ENCODE measurements at regions of chr7 and their contacts with region 1.

Region 1: GRCh38 chr7:48109848-48110663 is 21.0 kb downstream of the UPP1 start:
- DNase-seq: peak; percentile 91
- ATAC-seq: peak; percentile 93
- H3K4me3 Mint-ChIP-seq: no peak overlapping the region
- H3K27ac Mint-ChIP-seq: peak overlapping the region; percentile 41
- H3K4me1 Mint-ChIP-seq: peaks cover 12% of the 10 kb centered on the region
- H3K27me3 Mint-ChIP-seq: no peaks in the 10 kb centered on the region

Region 2: GRCh38 chr7:47866120-47866519 is 243.9 kb before region 1 on chr7:
- CTCF ChIA-PET with region 1: no interaction called
- DNase-seq: no peak
- ATAC-seq: no peak
- H3K4me3 Mint-ChIP-seq: no peak overlapping the region
- H3K27ac Mint-ChIP-seq: no peak overlapping the region
- H3K4me1 Mint-ChIP-seq: peaks cover 6% of the 10 kb centered on the region
- H3K27me3 Mint-ChIP-seq: no peaks in the 10 kb centered on the region

Region 3: DNA sequence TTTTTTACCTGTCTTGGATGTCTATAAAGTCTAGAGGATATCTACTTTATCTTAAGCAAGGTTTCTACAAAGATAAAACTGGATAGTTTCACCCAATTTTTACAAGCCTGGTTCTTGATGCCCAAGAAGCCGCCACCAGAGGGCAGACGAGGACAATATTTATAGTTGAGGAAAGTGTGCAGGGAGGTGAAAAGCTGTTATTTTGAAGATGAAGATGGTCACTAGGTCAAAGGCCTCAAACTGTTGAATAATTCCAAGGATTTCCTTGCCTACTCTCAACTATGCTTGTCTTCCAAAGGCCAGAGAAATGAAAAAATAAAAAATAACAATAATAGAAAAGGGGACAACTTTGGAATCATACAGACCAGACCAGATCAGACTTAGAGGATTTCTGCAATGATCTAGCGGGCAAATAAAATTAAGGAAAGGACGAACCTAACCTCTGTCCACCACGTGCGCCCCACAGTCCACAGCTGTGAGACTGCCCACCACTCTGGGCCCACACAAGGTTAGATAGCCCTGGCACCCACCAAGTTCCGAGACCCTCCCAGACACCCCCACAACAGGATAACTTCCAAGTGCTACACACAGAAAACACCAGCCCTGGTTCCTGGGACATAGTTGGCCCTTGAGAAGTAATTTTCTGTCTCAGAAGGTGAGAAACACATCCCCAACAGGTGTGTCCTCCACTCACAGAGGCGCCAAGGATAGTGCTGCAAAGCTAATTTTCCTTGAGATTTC is 164.6 kb before region 1 on chr7:
- CTCF ChIA-PET with region 1: interaction called, 54 read pairs
- DNase-seq: peak; percentile 82
- ATAC-seq: peak; percentile 83
- H3K4me3 Mint-ChIP-seq: no peak overlapping the region
- H3K27ac Mint-ChIP-seq: no peak overlapping the region
- H3K4me1 Mint-ChIP-seq: peaks cover 7% of the 10 kb centered on the region
- H3K27me3 Mint-ChIP-seq: no peaks in the 10 kb centered on the region

Region 4: GRCh38 chr7:47982610-47983009 is 127.4 kb before region 1 on chr7:
- CTCF ChIA-PET with region 1: interaction called, 22 read pairs
- DNase-seq: no peak
- ATAC-seq: no peak
- H3K4me3 Mint-ChIP-seq: no peak overlapping the region
- H3K27ac Mint-ChIP-seq: no peak overlapping the region
- H3K4me1 Mint-ChIP-seq: peaks cover 15% of the 10 kb centered on the region
- H3K27me3 Mint-ChIP-seq: no peaks in the 10 kb centered on the region

Region 5: DNA sequence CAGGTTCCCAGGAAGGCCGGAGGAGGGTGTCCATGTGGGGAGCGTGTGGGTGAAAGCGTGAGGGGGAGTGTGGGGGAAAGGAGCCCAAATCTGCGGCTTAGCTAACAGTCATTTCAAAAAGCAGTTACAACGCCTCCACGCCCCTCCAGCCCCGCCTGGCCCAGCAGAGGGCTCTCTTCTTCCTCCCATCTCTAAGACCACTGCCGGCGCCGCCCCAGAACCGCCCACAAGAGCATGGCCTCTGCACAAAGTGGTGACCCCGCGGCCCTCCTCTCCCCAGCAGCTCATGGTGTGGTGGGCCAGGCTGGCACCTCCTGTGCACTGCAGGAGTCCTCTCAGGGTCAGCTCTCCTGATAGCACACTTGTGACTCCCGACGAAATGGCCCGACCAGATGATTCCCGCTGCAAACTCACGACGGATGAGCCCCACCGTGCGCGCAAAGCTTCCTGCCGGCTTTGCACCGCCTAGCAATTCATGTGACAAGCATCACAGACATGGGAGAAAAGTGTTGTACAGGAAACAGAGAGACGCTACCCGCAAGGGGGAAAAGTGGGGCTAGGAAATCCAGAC is 118.2 kb before region 1 on chr7:
- CTCF ChIA-PET with region 1: interaction called, 70 read pairs
- DNase-seq: peak; percentile 96
- ATAC-seq: peak; percentile 98
- H3K4me3 Mint-ChIP-seq: peak overlapping the region; percentile 81
- H3K27ac Mint-ChIP-seq: peak overlapping the region; percentile 92
- H3K4me1 Mint-ChIP-seq: peaks cover 21% of the 10 kb centered on the region
- H3K27me3 Mint-ChIP-seq: no peaks in the 10 kb centered on the region

Region 6: DNA sequence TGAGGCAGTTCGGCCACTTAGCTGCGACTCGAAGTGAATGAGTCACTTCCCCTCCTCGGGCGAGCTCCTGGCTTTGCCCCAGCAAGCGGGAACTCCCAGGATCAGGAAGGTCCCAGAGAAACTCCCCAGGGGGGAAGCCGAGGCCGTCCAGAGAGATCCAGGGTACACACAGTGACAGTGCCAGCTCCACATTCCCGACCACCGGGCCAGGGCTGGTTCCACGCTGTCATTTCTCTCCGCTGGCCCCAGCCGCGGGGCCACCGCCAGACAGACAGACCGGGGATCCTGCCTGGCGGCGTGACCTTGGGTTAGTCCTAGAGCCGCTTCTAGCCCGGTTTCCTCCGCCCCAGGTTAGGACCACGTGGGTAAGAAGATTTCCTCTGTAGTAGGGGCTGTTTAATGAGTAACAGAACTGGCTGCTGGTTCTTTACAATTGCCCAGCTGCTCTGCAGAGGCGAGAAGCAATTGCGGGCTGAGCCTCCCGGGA is 21.5 kb before region 1 on chr7:
- CTCF ChIA-PET with region 1: interaction called, 12 read pairs
- DNase-seq: no peak
- ATAC-seq: peak; percentile 73
- H3K4me3 Mint-ChIP-seq: peak overlapping the region; percentile 82
- H3K27ac Mint-ChIP-seq: peak overlapping the region; percentile 98
- H3K4me1 Mint-ChIP-seq: peaks cover 71% of the 10 kb centered on the region
- H3K27me3 Mint-ChIP-seq: no peaks in the 10 kb centered on the region

Region 7: GRCh38 chr7:48094751-48095562 is 15.1 kb before region 1 on chr7:
- CTCF ChIA-PET with region 1: interaction called, 19 read pairs
- DNase-seq: no peak
- ATAC-seq: no peak
- H3K4me3 Mint-ChIP-seq: no peak overlapping the region
- H3K27ac Mint-ChIP-seq: peak overlapping the region; percentile 73
- H3K4me1 Mint-ChIP-seq: peaks cover 89% of the 10 kb centered on the region
- H3K27me3 Mint-ChIP-seq: no peaks in the 10 kb centered on the region

Region 8: DNA sequence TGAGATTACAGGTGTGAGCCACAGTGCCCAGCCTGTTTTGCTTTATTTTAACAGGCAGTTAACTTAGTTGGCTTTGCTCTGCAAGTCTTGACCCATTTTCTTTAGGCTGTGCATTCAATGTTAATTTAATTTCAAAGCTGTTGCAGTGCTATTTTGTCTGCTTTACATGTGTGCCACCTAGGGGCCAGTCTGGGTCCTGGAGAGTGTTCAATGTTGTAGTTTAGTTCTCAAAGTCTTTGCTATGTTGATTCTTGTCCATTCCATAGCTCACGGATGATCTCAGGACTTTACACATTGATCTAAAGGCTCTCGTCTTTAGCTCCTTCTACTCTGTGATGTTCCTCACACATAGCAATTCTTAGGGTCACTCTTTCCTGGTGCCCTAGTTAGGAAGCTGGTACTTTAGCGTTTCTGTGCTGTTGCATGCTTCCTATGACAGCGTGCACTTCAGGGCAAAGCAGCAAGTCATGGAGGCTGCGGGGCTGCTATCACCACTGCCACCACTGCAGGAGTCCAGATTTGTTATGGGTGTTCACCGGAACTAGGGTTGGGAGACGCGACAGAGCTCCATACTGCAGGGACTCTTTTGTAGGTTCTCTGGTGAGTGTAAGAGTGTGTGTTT is 44.8 kb after region 1 on chr7:
- CTCF ChIA-PET with region 1: interaction called, 10 read pairs
- DNase-seq: peak; percentile 67
- ATAC-seq: peak; percentile 78
- H3K4me3 Mint-ChIP-seq: no peak overlapping the region
- H3K27ac Mint-ChIP-seq: no peak overlapping the region
- H3K4me1 Mint-ChIP-seq: peaks cover 3% of the 10 kb centered on the region
- H3K27me3 Mint-ChIP-seq: peaks cover 38% of the 10 kb centered on the region

Measured in activated CD8-positive, alpha-beta memory T cell treated with anti-CD3 and anti-CD28 coated beads, Interleukin-2, amount 10 ng/mL, durations not matched to agents 7 days and 5 days (primary cell).